HEK293 (cell line): ENCODE measurements at regions of chr10 and their contacts with region 1.

Region 1: GRCh38 chr10:127715782-127716378 is 21.1 kb upstream of the FOXI2 start:
- H3K4me3 ChIP-seq: no peak overlapping the region
- H3K27ac ChIP-seq: no peak overlapping the region
- H3K4me1 ChIP-seq: no peaks in the 10 kb centered on the region
- CTCF ChIP-seq: no peak

Region 2: DNA sequence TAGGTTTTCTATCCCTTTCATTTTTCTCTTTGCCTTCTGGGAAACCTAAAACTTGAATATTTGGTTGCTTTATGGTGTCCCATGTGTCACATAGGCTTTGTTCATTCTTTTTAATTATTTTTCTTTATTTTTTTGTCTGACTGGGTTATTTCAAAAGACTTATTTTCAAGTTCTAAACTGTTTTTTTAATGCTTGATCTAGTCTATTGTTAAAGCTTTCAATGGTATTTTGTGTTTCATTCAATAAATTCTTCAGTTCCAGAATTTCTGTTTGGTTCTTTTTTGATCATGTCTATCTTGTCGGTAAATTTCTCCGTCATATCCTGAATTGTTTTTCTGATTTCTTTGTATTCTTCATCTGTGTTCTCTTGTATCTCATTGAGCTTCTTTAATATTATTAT is 80.0 kb before region 1 on chr10:
- CTCF ChIA-PET with region 1: no interaction called
- POLR2A ChIA-PET with region 1: no interaction called
- H3K4me3 ChIP-seq: no peak overlapping the region
- H3K27ac ChIP-seq: no peak overlapping the region
- H3K4me1 ChIP-seq: no peaks in the 10 kb centered on the region
- CTCF ChIP-seq: no peak

Region 3: GRCh38 chr10:127702271-127702670 is 13.6 kb before region 1 on chr10:
- CTCF ChIA-PET with region 1: interaction called, 12 read pairs
- POLR2A ChIA-PET with region 1: no interaction called
- H3K4me3 ChIP-seq: no peak overlapping the region
- H3K27ac ChIP-seq: no peak overlapping the region
- H3K4me1 ChIP-seq: no peaks in the 10 kb centered on the region
- CTCF ChIP-seq: no peak

Region 4: GRCh38 chr10:127813290-127813689 is 97.4 kb after region 1 on chr10:
- CTCF ChIA-PET with region 1: interaction called, 17 read pairs
- POLR2A ChIA-PET with region 1: no interaction called
- H3K4me3 ChIP-seq: no peak overlapping the region
- H3K27ac ChIP-seq: no peak overlapping the region
- H3K4me1 ChIP-seq: no peaks in the 10 kb centered on the region
- CTCF ChIP-seq: peak; percentile 26; the same call in 1 of the 2 replicates

Region 5: GRCh38 chr10:127853868-127854768 is 138.2 kb after region 1 on chr10:
- CTCF ChIA-PET with region 1: interaction called, 42 read pairs
- POLR2A ChIA-PET with region 1: no interaction called
- H3K4me3 ChIP-seq: no peak overlapping the region
- H3K27ac ChIP-seq: no peak overlapping the region
- H3K4me1 ChIP-seq: no peaks in the 10 kb centered on the region
- CTCF ChIP-seq: peak; percentile 80